Heart left ventricle (tissue), 16 donors: ENCODE measurements at regions of chr17 and their contacts with region 1.

Region 1: GRCh38 chr17:74430706-74431567 is 951 bp upstream of the GPRC5C start:
- DNase-seq: peak; percentile 83 to 90 (median 87)
- ATAC-seq: peak; percentile 59 to 76 (median 74)
- H3K4me3 ChIP-seq: peak overlapping the region; percentile 48 to 90 (median 69)
- H3K27ac ChIP-seq: peak overlapping the region; percentile 87 to 99 (median 96)
- H3K4me1 ChIP-seq: peaks cover 0 to 71% (median 36%) of the 10 kb centered on the region in 12 donors
- H3K27me3 ChIP-seq: peaks cover 0 to 49% (median 0%) of the 10 kb centered on the region in 9 donors
- CTCF ChIP-seq: no peak
- POLR2A ChIP-seq: peak in 1 of 2 donors; percentile 32

Region 2: DNA sequence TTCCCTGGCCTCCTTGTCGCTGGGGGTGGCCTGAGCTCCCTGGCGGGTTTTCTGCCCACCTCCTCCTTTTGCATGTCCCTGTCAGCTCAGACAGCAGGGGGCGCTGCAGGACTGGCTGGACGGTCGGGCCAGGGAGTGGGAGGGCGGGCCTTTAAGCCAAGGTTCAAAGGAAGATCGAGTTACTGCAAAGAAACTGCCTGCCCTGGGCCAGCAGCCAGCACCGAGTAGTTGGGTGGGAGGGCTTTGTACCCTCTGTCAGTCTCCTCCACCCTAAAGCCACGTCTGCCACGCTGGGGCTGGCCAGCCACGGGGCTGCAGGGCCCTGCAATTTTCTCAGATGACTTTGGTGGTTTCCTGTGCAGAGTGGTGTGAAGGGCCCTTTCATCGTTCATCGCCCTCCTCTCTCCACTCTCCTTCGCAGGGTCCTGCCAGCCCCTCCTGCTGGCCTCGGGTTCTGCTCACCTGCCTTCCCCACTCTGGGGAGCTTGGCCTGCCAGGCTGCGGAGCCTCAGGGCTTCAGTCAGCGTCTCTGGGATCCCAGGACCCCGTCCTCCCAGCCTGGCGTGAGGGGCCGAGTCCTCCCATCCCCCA is 51.3 kb before region 1 on chr17:
- intact Hi-C with region 1: loop called in 1 of 10 experiments (anchors 5 kb)
- DNase-seq: peak; percentile 89 to 97 (median 90)
- ATAC-seq: peak; percentile 84 to 97 (median 94)
- H3K4me3 ChIP-seq: peak overlapping the region in 7 of 12 donors; percentile 5 to 41 (median 14)
- H3K27ac ChIP-seq: peak overlapping the region in 8 of 12 donors; percentile 7 to 56 (median 28)
- H3K4me1 ChIP-seq: peaks cover 0 to 18% (median 12%) of the 10 kb centered on the region in 12 donors
- H3K27me3 ChIP-seq: peaks cover 0 to 7% (median 0%) of the 10 kb centered on the region in 9 donors
- CTCF ChIP-seq: peak; percentile 91 to 99 (median 97)
- POLR2A ChIP-seq: no peak

Region 3: DNA sequence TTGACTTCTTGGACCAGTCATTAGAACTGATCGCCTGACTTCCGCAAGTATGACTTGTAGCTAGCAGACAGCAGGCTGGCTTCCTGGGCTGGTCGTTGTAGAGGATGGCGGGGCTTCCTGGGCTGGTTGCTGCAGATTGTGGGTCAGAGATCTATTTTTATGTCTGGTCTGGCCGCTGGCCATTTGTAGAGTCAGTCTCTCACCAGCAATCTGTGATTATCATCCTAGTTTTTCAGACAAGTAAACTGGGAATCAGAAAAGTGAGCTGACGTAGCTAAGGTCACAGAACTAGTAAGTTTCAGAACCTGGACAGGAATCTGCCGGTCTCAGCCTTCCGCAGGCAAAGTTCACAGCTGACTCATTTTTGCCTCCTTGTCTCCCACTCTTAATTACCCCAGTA is 44.6 kb before region 1 on chr17:
- intact Hi-C with region 1: loop called in 3 of 10 experiments (anchors 5 kb)
- DNase-seq: peak; percentile 73 to 86 (median 79)
- ATAC-seq: peak; percentile 70 to 94 (median 84)
- H3K4me3 ChIP-seq: no peak overlapping the region
- H3K27ac ChIP-seq: peak overlapping the region in 11 of 12 donors; percentile 36 to 85 (median 70)
- H3K4me1 ChIP-seq: peaks cover 0 to 14% (median 13%) of the 10 kb centered on the region in 12 donors
- H3K27me3 ChIP-seq: no peaks in the 10 kb centered on the region
- CTCF ChIP-seq: no peak
- POLR2A ChIP-seq: no peak

Region 4: GRCh38 chr17:74394977-74395376 is 36.0 kb before region 1 on chr17:
- intact Hi-C with region 1: loop called in 1 of 10 experiments (anchors 5 kb)
- DNase-seq: peak in 1 of 5 donors; percentile 33
- ATAC-seq: peak in 1 of 4 donors; percentile 33
- H3K4me3 ChIP-seq: no peak overlapping the region
- H3K27ac ChIP-seq: no peak overlapping the region
- H3K4me1 ChIP-seq: peaks cover 0 to 11% (median 3%) of the 10 kb centered on the region in 12 donors
- H3K27me3 ChIP-seq: no peaks in the 10 kb centered on the region
- CTCF ChIP-seq: no peak
- POLR2A ChIP-seq: no peak